ENCODE measurements at regions of chr20 and their contacts with region 1.

Region 1: GRCh38 chr20:38165089-38165989 is at the start of gene TGM2:
- DNase-seq: peak; percentile 58 to 69
- ATAC-seq: peak; percentile 87 to 97 (median 96)
- H3K4me3 ChIP-seq: no peak within 1 kb of the TSS
- H3K4me3 Mint-ChIP-seq: peak within 1 kb of the TSS; percentile 56
- H3K27ac ChIP-seq: no peak within 1 kb of the TSS
- H3K27ac Mint-ChIP-seq: peak within 1 kb of the TSS in 1 of 2 donors; percentile 12
- H3K4me1 ChIP-seq: peaks cover 18% of the 10 kb centered on the region
- H3K4me1 Mint-ChIP-seq: peaks cover 12 to 14% of the 10 kb centered on the region in 2 donors
- H3K27me3 ChIP-seq: peaks cover 2% of the 10 kb centered on the region
- H3K27me3 Mint-ChIP-seq: peaks cover 4 to 7% of the 10 kb centered on the region in 2 donors
- CTCF ChIP-seq: peak; percentile 61
- total RNA-seq, gene TGM2: 0.33 TPM in 2 of 3 donors, not detected in the other

Region 2: DNA sequence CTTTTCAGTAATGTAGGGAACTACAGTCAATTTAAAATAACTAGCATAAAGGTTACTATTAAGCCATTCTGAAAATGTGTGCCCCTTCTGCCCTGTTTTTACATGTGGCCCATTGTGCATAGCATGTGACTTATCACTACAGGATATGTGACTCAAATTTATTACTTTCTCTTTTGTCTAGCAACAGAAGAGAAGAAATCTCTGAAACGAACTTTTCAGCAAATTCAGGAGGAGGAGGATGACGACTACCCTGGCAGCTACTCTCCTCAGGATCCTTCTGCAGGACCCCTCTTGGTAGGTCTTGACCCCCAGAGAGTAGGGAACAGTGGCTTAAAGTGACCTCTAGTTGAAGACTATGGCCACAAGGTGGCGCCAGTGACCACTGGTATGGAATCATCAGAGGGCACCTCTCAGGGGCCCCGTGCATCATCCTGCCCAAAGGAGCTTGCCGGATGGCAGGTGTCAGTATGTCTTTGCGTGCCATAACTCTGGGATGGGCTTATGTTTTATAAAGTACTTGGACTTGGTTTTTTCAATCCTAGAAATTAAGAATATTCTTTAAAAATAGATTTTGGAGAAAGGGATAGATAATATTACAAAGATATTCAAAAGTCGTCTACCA is 107.9 kb before region 1 on chr20:
- intact Hi-C with region 1: loop called (anchors 1 kb)
- DNase-seq: peak; percentile 80 to 87
- ATAC-seq: peak; percentile 88 to 94 (median 89)
- H3K4me3 ChIP-seq: no peak overlapping the region
- H3K4me3 Mint-ChIP-seq: no peak overlapping the region
- H3K27ac ChIP-seq: no peak overlapping the region
- H3K27ac Mint-ChIP-seq: peak overlapping the region; percentile 34 to 63
- H3K4me1 ChIP-seq: no peaks in the 10 kb centered on the region
- H3K4me1 Mint-ChIP-seq: peaks cover 15 to 17% of the 10 kb centered on the region in 2 donors
- H3K27me3 ChIP-seq: no peaks in the 10 kb centered on the region
- H3K27me3 Mint-ChIP-seq: no peaks in the 10 kb centered on the region
- CTCF ChIP-seq: peak; percentile 96

Region 3: GRCh38 chr20:38073307-38074071 is 91.8 kb before region 1 on chr20:
- intact Hi-C with region 1: loop called (anchors 1 kb)
- DNase-seq: peak in 1 of 2 donors; percentile 64
- ATAC-seq: peak; percentile 76 to 83 (median 81)
- H3K4me3 ChIP-seq: no peak overlapping the region
- H3K4me3 Mint-ChIP-seq: no peak overlapping the region
- H3K27ac ChIP-seq: no peak overlapping the region
- H3K27ac Mint-ChIP-seq: peak overlapping the region; percentile 35 to 44
- H3K4me1 ChIP-seq: peaks cover 3% of the 10 kb centered on the region
- H3K4me1 Mint-ChIP-seq: peaks cover 21 to 25% of the 10 kb centered on the region in 2 donors
- H3K27me3 ChIP-seq: no peaks in the 10 kb centered on the region
- H3K27me3 Mint-ChIP-seq: no peaks in the 10 kb centered on the region
- CTCF ChIP-seq: peak; percentile 74

Measured in natural killer cell (primary cell).